ENCODE measurements at regions of chr15 and their contacts with region 1.

Region 1: DNA sequence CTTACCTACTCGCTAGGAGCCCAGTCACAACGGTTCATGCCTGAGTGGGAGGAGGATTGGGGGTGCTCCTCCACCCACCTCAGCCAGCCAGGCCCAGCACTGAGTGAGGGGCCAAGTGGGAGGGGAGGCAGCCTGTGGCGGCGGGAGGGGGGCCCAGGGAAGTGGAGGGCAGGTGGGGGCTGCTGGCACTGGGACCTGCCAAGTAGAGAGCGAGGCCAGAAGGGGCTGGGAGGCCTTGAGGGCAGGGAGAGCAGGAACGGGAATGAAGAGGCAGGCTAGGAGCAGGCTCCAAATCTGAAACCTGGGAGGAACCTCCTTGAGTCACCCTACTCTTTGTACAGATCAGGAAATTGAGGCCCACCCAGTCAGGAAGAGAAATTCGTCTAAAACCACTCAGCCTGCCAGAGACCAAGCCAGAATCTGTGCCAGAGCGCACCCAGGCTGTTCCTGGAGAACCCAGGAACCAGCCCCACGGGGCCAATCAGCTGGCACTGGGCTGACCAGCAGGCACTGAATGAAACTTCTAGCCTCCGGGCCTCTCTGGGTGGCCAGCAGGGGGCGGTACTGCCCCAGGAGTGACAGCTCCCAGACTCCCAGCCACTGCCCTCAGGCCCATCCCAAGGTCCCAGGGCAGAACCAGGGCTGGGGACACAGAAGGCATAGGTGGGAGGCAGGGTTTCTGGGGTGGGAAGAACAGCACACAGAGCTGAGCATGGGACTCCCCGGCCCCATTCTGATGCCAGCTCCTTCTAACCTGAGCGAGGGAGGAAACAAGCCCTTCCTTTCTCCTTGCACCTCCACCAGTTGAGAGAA is 14.8 kb upstream of the CYP11A1 start:
- DNase-seq: peak; percentile 82
- H3K4me3 Mint-ChIP-seq: no peak overlapping the region
- H3K27ac Mint-ChIP-seq: no peak overlapping the region
- H3K4me1 Mint-ChIP-seq: peaks cover 59% of the 10 kb centered on the region
- H3K27me3 Mint-ChIP-seq: no peaks in the 10 kb centered on the region

Region 2: DNA sequence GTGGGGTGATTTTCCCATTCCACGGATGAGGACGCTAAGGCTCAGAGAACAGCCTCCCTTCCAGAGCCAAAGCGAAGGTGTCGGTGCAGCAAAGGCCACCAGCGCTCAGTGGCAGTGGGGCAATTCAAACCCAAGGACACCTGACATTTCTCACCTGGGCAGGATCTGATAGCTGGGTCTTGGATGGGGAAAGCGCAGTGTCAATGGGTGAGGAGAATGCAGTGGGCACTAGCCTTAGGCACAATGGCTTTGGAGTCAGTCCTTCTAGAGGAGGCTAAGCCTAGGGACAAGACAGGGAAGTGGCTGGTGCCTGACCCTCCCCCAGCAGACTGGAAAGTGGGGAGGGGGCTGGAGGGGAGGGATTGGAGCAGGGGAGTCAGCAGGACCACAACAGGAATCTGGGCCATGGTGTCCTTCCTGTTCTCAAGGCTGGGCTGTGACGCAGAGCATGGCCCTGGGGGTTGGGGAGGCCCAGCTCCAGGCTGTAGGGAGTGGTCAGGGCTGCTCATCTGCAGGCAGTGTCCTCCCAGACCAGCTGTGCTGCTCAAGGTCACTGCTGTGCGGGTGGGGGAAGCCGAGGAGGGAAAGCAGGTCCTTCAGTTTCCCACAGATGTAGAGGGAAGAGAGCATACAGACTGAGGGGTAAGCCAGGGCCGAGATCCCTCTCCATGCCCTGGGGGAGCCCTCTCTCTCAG is 55.6 kb before region 1 on chr15:
- CTCF ChIA-PET with region 1: no interaction called
- DNase-seq: no peak
- H3K4me3 Mint-ChIP-seq: no peak overlapping the region
- H3K27ac Mint-ChIP-seq: no peak overlapping the region
- H3K4me1 Mint-ChIP-seq: peaks cover 12% of the 10 kb centered on the region
- H3K27me3 Mint-ChIP-seq: peaks cover 25% of the 10 kb centered on the region

Region 3: DNA sequence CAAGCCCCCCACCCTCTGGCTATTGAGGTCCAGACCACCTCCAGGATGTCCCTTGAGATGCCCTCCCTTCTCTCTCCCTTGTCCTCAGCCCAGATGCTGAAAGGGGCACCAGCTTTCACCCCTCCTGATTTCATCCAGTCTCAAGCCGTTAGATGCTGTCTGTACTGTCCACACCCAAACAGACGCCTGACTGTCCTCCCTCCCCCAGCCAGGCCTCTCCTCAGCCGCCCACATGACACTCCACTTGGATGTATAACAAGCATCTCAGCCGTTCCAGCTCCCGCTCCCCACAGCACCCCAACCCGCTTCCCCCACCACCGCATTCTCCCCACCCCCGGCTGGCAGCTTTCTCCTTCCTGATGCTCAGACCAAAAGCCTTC is 10.2 kb after region 1 on chr15:
- CTCF ChIA-PET with region 1: interaction called, 10 read pairs
- DNase-seq: no peak
- H3K4me3 Mint-ChIP-seq: no peak overlapping the region
- H3K27ac Mint-ChIP-seq: no peak overlapping the region
- H3K4me1 Mint-ChIP-seq: peaks cover 39% of the 10 kb centered on the region
- H3K27me3 Mint-ChIP-seq: no peaks in the 10 kb centered on the region

Region 4: DNA sequence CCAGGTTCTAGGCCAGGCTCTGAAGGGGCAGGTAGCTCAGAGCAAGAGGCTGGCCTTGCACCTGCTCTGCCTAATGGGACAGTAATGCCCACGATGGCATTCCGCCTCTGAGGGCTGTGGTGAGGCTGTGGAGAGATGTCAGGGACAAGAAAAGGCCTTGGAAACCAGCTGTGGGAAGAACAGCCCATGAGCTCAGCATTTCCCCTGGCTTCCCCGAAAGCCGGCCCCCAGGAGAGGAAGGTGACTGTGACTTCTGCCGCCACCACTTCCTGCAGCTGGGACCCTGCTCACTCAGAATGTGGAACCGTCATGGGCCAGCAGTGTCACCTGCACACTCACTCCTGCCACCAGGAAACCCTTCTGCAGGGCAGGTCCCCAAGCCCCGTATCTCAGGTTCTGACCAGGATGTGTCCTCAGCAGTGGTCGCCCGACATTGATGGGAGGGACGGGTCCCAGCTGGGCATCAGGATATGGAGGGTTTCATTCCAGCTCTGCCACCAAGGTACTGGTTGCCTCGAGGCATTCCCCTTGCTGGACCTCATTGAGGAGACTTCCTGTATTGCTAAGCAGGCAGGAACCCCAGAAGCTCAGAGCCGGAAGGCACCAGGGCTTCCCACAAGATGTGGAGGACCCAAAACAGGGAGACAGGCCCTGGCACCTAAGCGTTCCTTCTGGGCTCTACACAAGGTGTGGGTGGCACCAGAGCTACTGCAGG is 20.8 kb after region 1 on chr15:
- CTCF ChIA-PET with region 1: interaction called, 15 read pairs
- DNase-seq: peak; percentile 82
- H3K4me3 Mint-ChIP-seq: no peak overlapping the region
- H3K27ac Mint-ChIP-seq: peak overlapping the region; percentile 90
- H3K4me1 Mint-ChIP-seq: peaks cover 65% of the 10 kb centered on the region
- H3K27me3 Mint-ChIP-seq: no peaks in the 10 kb centered on the region

Region 5: DNA sequence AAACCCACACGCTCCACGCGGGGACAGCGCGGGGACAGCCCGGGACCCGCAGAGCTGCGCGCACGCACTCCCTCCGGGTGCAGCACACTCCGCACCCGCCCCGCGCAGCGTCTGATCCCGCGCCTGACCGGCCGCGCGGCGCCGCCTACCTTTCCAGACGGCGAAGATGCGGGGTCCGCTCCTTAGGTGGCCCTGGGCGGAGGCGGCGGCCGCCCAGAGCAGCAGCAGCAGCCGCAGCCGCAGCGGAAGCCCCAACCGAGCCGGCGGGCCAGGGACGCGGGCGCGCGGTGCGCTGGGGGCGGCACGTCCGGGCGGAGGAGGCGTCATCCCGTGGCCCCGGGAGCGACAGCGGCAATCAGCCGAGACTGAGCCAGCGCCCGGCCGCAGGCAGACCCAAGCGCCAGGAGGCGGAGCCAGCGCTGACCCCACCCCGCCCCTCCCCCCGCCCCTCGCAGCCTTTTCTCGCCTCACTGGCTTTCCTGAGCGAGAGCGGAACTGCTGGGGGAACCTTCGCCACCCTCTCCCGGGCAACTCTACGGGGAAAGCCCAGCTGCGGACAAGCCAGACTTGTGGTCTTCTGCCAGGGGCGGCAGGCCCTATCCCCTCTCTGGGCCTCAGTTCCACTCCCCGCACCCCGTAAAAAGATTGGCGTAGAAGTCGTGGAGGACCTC is 51.5 kb after region 1 on chr15 and contains the start of gene SEMA7A:
- CTCF ChIA-PET with region 1: interaction called, 307 read pairs
- DNase-seq: peak; percentile 88
- H3K4me3 Mint-ChIP-seq: peak within 1 kb of the TSS; percentile 74
- H3K27ac Mint-ChIP-seq: peak within 1 kb of the TSS; percentile 60
- H3K4me1 Mint-ChIP-seq: peaks cover 43% of the 10 kb centered on the region
- H3K27me3 Mint-ChIP-seq: peaks cover 22% of the 10 kb centered on the region

Region 6: DNA sequence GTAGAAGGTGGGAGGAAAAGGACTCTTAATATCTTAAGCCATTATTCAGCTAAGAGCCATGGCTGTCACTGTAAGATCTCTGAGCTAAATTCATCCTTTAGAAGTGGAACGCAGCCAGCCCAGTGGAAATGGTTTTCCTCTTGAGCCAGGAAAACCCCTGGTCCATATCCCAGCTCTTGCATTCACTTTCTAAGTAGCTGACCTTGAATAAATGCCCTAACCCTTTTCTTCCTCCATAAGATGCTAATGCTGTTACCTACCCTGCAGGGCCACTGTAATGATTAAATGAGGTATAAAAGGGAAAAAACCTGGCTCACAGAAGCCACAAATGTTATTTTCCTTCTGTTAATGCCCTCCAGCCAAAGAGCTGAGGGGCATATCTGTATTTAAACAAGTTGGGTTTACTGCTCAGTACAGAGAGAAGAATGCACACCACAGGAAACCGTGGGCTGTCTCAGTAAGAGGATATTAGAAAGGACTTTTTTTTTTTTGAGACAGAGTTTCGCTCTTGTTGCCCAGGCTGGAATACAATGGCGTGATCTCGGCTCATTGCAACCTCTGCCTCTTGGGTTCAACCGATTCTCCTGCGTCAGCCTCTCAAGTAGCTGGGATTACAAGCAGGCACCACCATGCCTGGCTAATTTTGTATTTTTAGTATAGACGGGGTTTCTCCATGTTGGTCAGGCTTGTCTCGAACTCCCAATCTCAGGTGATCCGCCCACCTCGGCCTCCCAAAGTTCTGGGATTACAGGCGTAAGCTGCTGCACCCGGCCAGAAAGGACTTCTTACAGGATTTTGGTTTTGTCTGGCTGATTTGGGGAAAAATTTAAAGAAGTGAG is 71.9 kb after region 1 on chr15:
- CTCF ChIA-PET with region 1: interaction called, 307 read pairs
- DNase-seq: no peak
- H3K4me3 Mint-ChIP-seq: no peak overlapping the region
- H3K27ac Mint-ChIP-seq: no peak overlapping the region
- H3K4me1 Mint-ChIP-seq: peaks cover 31% of the 10 kb centered on the region
- H3K27me3 Mint-ChIP-seq: no peaks in the 10 kb centered on the region

Measured in activated naive CD4-positive, alpha-beta T cell treated with anti-CD3 and anti-CD28 coated beads, Interleukin-2, amount 10 ng/mL, durations not matched to agents 7 days and 5 days (primary cell).